ENCODE measurements at regions of chr9 and their contacts with region 1.

Region 1: GRCh38 chr9:77977210-77977611 is 54.4 kb downstream of the GNAQ start:
- DNase-seq: peak; percentile 50 to 66
- ATAC-seq: peak; percentile 52

Region 2: GRCh38 chr9:77827104-77827784 is 150.0 kb before region 1 on chr9:
- intact Hi-C with region 1: no loop called
- DNase-seq: no peak
- ATAC-seq: peak; percentile 79

Region 3: DNA sequence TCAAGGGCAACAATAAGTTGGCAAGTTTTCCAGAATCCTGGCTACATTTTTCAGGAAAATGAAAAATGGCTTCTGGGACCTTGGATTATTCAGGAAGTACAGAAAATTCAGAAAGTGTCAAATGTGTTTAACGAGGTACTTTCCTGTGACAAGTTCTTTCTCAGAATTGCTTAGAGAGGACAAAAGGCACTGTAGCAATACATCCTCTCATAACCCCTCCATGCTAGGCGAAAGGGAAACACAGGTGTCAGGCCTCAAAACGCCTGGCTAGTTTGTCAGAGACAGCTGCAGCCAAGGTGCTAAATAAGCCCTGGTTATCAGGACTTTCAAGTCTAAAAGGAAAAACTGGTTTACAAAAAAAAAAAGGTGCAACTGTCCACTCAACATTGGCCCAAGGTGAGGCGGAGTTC is 60.8 kb before region 1 on chr9:
- intact Hi-C with region 1: loop called in 1 of 2 experiments (anchors 10 kb)
- DNase-seq: no peak
- ATAC-seq: no peak